GM18951 (cell line): ENCODE measurements at regions of chr1 and their contacts with region 1.

Region 1: GRCh38 chr1:109984456-109985275 is at the start of gene AHCYL1:
- POLR2A ChIP-seq: peak; percentile 83

Region 2: GRCh38 chr1:109548321-109549267 is 436.1 kb before region 1 on chr1 and contains the start of gene GNAI3:
- in situ Hi-C with region 1: loop called (anchors 10 kb)
- POLR2A ChIP-seq: peak; percentile 92

Region 3: GRCh38 chr1:109655601-109656519 is 328.8 kb before region 1 on chr1 and contains the start of gene GSTM4:
- in situ Hi-C with region 1: loop called (anchors 10 kb)
- POLR2A ChIP-seq: peak; percentile 64

Region 4: DNA sequence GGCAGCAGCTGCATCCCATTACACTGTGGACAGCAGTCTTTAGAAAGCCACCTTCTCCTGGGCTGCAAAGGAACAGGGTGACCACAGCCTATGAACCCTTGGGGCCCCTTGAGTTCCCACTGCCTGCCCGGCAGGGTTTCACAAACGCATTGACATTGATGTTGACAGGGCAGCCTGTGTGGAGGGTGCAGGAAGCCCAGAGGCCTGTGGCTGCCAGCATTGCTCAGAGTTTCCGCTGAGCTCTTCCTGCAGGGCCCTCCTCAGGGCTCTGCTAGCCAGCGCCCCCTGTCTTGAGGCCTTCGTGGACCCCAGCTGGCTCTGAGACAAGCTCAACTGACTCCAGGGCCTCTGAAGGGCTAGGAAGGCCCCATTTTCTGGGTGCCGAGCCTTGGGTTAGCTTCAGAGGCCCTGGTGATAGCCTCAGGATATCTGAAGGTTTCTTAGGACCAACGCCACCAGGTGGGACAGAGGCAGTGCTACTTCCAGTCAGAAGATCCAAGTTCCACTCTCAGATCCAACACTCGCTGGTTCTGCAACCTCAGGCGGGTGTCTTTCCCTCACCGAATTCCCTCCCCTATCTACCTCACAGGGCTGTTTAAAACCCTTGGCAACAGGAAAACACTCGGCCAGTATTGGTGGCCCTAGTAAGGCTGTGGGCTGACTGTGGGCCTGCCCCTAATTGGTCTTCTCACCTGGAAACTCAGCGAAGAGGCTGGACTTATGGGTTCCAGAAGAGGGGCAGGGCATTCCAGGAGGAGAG is 193.8 kb before region 1 on chr1:
- in situ Hi-C with region 1: loop called (anchors 5 kb)
- POLR2A ChIP-seq: no peak

Region 5: DNA sequence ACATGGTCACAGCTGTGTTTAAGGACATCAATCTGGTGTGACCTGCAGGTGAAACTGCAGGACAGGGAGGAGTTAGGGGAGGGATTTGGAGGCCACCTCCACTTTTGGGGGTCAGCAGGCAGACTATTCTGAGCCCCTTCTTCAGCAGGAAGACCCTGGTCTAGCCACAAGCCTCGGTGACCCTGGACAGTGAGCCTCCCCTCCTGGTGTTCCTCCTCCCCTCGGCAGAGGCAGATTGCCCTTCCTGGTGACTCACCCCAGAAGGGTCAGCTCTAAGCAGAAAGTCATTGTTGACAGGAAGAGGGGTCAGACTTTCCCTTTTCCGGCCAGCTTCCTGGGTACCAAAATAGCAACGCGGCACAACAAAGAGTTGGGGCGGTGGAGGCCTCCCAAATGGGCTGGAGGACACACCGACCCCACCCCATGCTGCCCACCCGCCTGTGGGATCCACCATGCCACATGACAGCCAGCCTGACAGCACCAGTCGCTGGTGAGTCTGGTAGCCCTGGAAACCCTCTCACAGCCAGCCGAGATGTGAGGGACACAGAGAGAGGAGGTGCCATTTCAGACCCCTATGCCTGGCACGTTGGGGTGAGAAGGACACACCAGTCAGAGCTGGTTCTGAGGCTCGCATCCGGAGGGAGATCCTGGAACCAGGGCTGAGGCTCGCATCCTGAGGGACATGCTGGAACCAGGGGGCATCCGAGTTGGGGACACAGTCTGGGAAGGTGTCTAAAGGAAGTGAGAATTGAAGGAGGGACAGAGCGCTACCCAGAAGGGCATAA is 88.8 kb before region 1 on chr1:
- in situ Hi-C with region 1: no loop called
- POLR2A ChIP-seq: no peak